GM12878 (cell line): ENCODE measurements at regions of chr17 and their contacts with region 1.

Region 1: GRCh38 chr17:78781948-78782916 is at the start of gene CYTH1:
- DNase-seq: no peak
- ATAC-seq: peak; percentile 54
- H3K4me3 ChIP-seq: peak within 1 kb of the TSS; percentile 89
- H3K27ac ChIP-seq: peak within 1 kb of the TSS; percentile 97
- H3K4me1 ChIP-seq: peaks cover 6% of the 10 kb centered on the region; the same call in 1 of the 2 replicates
- H3K27me3 ChIP-seq: no peaks in the 10 kb centered on the region
- CTCF ChIP-seq: no peak
- EP300 ChIP-seq: no peak
- POLR2A ChIP-seq: peak; percentile 85
- RAD21 ChIP-seq: 0 out of 2 replicates have a peak, but pooled peaks have one; percentile 1
- polyA plus RNA-seq, gene CYTH1: 6.6 to 11.8 TPM

Region 2: DNA sequence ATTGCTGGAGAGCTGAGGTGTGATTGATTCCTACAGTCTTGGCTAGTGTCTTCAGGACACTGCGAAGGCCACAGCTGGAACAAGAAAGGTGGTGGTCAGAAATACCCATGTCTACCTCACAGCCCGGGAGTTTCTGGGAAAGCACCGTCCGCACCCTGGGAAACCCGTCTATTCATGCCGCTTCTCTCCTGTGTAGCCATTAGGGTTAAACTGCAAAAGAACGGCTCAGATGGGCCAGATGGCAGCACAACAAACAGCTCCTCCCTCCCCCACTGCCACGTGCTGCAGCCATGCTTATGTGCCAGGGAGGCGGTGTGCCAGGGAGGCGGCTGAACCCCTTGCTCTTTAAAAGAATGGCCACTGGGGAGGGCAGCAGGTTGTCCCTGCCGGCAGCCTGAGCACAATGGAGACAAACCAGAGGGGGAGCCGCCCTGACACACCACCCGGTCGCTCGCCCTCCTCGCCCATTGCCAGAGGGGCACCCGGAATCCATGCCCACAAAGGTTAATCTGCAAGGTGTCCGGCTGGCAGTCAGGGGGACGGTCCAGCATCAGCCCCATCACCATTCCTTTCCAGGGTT is 65.3 kb before region 1 on chr17:
- CTCF ChIA-PET with region 1: interaction called, 5 read pairs
- POLR2A ChIA-PET with region 1: interaction called, 7 read pairs
- RAD21 ChIA-PET with region 1: interaction called, 12 read pairs
- SMC1A ChIA-PET with region 1: interaction called, 4 read pairs
- in situ Hi-C with region 1: no loop called
- intact Hi-C with region 1: no loop called
- DNase-seq: no peak
- ATAC-seq: peak; percentile 63
- H3K4me3 ChIP-seq: peak overlapping the region; percentile 37
- H3K27ac ChIP-seq: peak overlapping the region; percentile 87
- H3K4me1 ChIP-seq: peaks cover 63% of the 10 kb centered on the region
- H3K27me3 ChIP-seq: no peaks in the 10 kb centered on the region
- CTCF ChIP-seq: no peak
- EP300 ChIP-seq: no peak
- POLR2A ChIP-seq: peak; percentile 26
- RAD21 ChIP-seq: no peak

Region 3: DNA sequence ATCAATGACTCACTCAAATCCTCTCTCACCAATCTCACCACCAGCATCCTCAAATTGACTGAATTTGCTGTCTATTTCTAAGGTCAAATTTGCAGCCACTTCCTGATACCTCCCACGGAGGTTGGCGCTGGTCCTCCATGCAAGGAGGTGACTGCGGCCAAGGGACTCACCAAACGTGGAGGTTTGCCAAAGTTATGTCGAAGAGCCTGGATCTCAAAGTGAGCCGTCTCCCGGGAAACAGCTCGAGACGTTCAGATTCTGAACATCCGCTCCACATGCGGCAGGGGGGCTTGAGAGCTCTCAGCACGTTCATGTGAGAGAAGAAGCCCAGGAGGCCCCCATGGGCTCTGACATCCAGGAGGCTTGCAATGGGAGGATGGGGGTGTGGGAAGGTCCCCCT is 174.9 kb after region 1 on chr17:
- CTCF ChIA-PET with region 1: no interaction called
- POLR2A ChIA-PET with region 1: no interaction called
- RAD21 ChIA-PET with region 1: no interaction called
- SMC1A ChIA-PET with region 1: no interaction called
- in situ Hi-C with region 1: no loop called
- intact Hi-C with region 1: no loop called
- DNase-seq: no peak
- ATAC-seq: no peak
- H3K4me3 ChIP-seq: no peak overlapping the region
- H3K27ac ChIP-seq: no peak overlapping the region
- H3K4me1 ChIP-seq: no peaks in the 10 kb centered on the region
- H3K27me3 ChIP-seq: no peaks in the 10 kb centered on the region; a peak in 2 of 4 replicates
- CTCF ChIP-seq: no peak
- EP300 ChIP-seq: no peak
- POLR2A ChIP-seq: no peak
- RAD21 ChIP-seq: no peak